Activated T-helper 2 cell treated with anti-CD3 and anti-CD28 coated beads, Interferon-gamma antibody, Interleukin-2, Interleukin-4, amounts not matched to agents 10 μg/mL and 5 μg/mL and 100 μg/mL, durations not matched to agents 14 hours and 24 hours and 36 hours (primary cell): ENCODE measurements at regions of chr15 and their contacts with region 1.

Region 1: GRCh38 chr15:78234515-78235040 is at the start of gene ACSBG1:
- DNase-seq: no peak
- H3K4me3 Mint-ChIP-seq: no peak within 1 kb of the TSS
- H3K27ac Mint-ChIP-seq: no peak within 1 kb of the TSS
- H3K4me1 Mint-ChIP-seq: peaks cover 7% of the 10 kb centered on the region
- H3K27me3 Mint-ChIP-seq: peaks cover 11% of the 10 kb centered on the region
- total RNA-seq, gene ACSBG1: 0.64 and 0.96 TPM in 2 replicates

Region 2: GRCh38 chr15:78177447-78177873 is 57.1 kb before region 1 on chr15:
- intact Hi-C with region 1: loop called (anchors 5 kb)
- DNase-seq: no peak
- H3K4me3 Mint-ChIP-seq: no peak overlapping the region
- H3K27ac Mint-ChIP-seq: no peak overlapping the region
- H3K4me1 Mint-ChIP-seq: peaks cover 26% of the 10 kb centered on the region
- H3K27me3 Mint-ChIP-seq: no peaks in the 10 kb centered on the region